ENCODE measurements at regions of chr16 and their contacts with region 1.

Region 1: GRCh38 chr16:64206862-64207261 is 915.0 kb downstream of the CDH11 start:
- DNase-seq: peak; percentile 12
- ATAC-seq: no peak
- H3K4me3 ChIP-seq: no peak overlapping the region
- H3K27ac ChIP-seq: no peak overlapping the region
- H3K4me1 ChIP-seq: no peaks in the 10 kb centered on the region
- H3K27me3 ChIP-seq: no peaks in the 10 kb centered on the region
- CTCF ChIP-seq: no peak
- POLR2A ChIP-seq: no peak
- RAD21 ChIP-seq: no peak

Region 2: DNA sequence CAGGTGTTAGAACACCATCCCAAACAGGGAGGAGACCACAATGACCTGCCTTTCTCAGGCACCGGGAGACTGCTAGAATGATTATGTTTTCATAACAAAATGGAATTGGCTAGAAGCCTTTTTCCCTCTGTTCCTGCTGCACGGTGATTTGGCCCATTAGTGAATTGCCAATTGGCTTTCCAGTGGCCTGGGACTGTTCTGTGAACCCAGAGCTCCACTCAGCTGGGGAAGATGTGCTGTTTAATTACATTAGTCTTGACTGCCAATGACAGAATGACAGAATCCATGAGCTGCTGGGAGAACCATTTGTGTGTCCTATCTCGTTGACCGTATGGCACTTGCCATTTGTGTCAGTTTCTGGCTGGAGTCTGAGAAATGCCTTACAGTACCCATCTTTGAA is 672.1 kb after region 1 on chr16:
- CTCF ChIA-PET with region 1: no interaction called
- POLR2A ChIA-PET with region 1: no interaction called
- dilution Hi-C with region 1: no loop called
- in situ Hi-C with region 1: no loop called
- intact Hi-C with region 1: loop called (anchors 10 kb)
- DNase-seq: no peak
- ATAC-seq: no peak
- H3K4me3 ChIP-seq: no peak overlapping the region
- H3K27ac ChIP-seq: no peak overlapping the region
- H3K4me1 ChIP-seq: no peaks in the 10 kb centered on the region; the same call in 1 of the 2 replicates
- H3K27me3 ChIP-seq: no peaks in the 10 kb centered on the region
- CTCF ChIP-seq: no peak
- POLR2A ChIP-seq: no peak
- RAD21 ChIP-seq: no peak

Measured in IMR-90 (cell line).